ENCODE measurements at regions of chr3 and their contacts with region 1.

Region 1: GRCh38 chr3:155815030-155815429 is 9.0 kb upstream of the C3orf33 start:
- DNase-seq: no peak
- ATAC-seq: no peak
- H3K4me3 Mint-ChIP-seq: no peak overlapping the region
- H3K27ac Mint-ChIP-seq: no peak overlapping the region
- H3K4me1 Mint-ChIP-seq: no peaks in the 10 kb centered on the region
- H3K27me3 Mint-ChIP-seq: peaks cover 3% of the 10 kb centered on the region

Region 2: GRCh38 chr3:155682426-155683343 is 132.3 kb before region 1 on chr3:
- CTCF ChIA-PET with region 1: no interaction called
- POLR2A ChIA-PET with region 1: no interaction called
- intact Hi-C with region 1: no loop called
- DNase-seq: no peak
- ATAC-seq: no peak
- H3K4me3 Mint-ChIP-seq: no peak overlapping the region
- H3K27ac Mint-ChIP-seq: no peak overlapping the region
- H3K4me1 Mint-ChIP-seq: no peaks in the 10 kb centered on the region
- H3K27me3 Mint-ChIP-seq: no peaks in the 10 kb centered on the region

Region 3: GRCh38 chr3:155766206-155766605 is 48.8 kb before region 1 on chr3:
- CTCF ChIA-PET with region 1: no interaction called
- POLR2A ChIA-PET with region 1: no interaction called
- intact Hi-C with region 1: no loop called
- DNase-seq: no peak
- ATAC-seq: peak; percentile 87
- H3K4me3 Mint-ChIP-seq: no peak overlapping the region
- H3K27ac Mint-ChIP-seq: no peak overlapping the region
- H3K4me1 Mint-ChIP-seq: no peaks in the 10 kb centered on the region
- H3K27me3 Mint-ChIP-seq: no peaks in the 10 kb centered on the region

Region 4: DNA sequence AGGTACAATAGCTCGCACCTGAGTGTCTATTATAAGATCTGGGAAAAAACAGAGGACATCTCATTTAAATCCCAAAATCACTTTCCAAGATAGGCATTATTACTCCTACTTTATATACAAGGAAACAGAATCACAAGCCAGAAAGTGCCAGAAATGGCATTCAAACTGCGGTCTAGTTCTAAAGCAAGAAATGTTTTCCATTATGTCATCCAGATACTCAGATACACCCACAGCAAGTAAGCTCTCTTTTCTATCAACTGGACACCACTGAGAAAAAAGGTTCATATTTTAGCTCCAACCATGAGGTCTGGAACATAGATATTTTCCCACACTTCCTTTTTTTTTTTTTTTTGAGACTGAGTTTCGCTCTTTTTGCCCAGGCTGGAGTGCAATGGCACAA is 31.1 kb after region 1 on chr3:
- CTCF ChIA-PET with region 1: interaction called, 3 read pairs
- POLR2A ChIA-PET with region 1: no interaction called
- intact Hi-C with region 1: loop called in 1 of 2 experiments (anchors 2 kb)
- DNase-seq: no peak
- ATAC-seq: no peak
- H3K4me3 Mint-ChIP-seq: no peak overlapping the region
- H3K27ac Mint-ChIP-seq: no peak overlapping the region
- H3K4me1 Mint-ChIP-seq: peaks cover 47% of the 10 kb centered on the region
- H3K27me3 Mint-ChIP-seq: no peaks in the 10 kb centered on the region